IMR-90 (cell line): ENCODE measurements at regions of chr2 and their contacts with region 1.

Region 1: DNA sequence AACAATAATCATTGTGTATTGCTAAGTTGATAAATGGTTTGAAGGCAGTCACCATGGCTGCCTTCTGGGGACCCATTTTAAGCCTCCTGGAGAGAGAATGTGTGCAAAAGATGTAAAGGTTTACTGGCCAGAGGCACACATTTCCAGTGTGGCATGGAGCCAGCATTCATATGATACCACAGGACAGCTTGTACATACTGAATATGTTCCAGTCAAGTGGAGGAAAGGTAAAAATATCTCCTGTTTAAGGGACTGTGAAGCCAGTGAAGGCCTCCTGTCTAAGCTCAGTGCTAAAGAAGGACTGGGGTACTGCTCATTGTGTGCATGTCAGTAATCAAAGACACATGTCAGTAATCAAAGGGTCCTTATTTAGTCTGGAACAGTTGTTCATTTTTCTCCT is 119.2 kb downstream of the BABAM2 start:
- DNase-seq: peak; percentile 15
- ATAC-seq: no peak
- H3K4me3 ChIP-seq: no peak overlapping the region
- H3K27ac ChIP-seq: no peak overlapping the region
- H3K4me1 ChIP-seq: no peaks in the 10 kb centered on the region
- H3K27me3 ChIP-seq: no peaks in the 10 kb centered on the region
- CTCF ChIP-seq: no peak
- POLR2A ChIP-seq: no peak
- RAD21 ChIP-seq: no peak

Region 2: GRCh38 chr2:28074137-28074536 is 64.4 kb after region 1 on chr2:
- CTCF ChIA-PET with region 1: no interaction called
- POLR2A ChIA-PET with region 1: no interaction called
- dilution Hi-C with region 1: no loop called
- in situ Hi-C with region 1: no loop called
- intact Hi-C with region 1: loop called (anchors 5 kb)
- DNase-seq: no peak
- ATAC-seq: no peak
- H3K4me3 ChIP-seq: no peak overlapping the region
- H3K27ac ChIP-seq: no peak overlapping the region
- H3K4me1 ChIP-seq: no peaks in the 10 kb centered on the region
- H3K27me3 ChIP-seq: no peaks in the 10 kb centered on the region
- CTCF ChIP-seq: no peak
- POLR2A ChIP-seq: no peak
- RAD21 ChIP-seq: no peak

Region 3: GRCh38 chr2:28778392-28778791 is 768.7 kb after region 1 on chr2:
- CTCF ChIA-PET with region 1: no interaction called
- POLR2A ChIA-PET with region 1: no interaction called
- dilution Hi-C with region 1: no loop called
- in situ Hi-C with region 1: no loop called
- intact Hi-C with region 1: no loop called
- DNase-seq: no peak
- ATAC-seq: no peak
- H3K4me3 ChIP-seq: no peak overlapping the region
- H3K27ac ChIP-seq: no peak overlapping the region
- H3K4me1 ChIP-seq: no peaks in the 10 kb centered on the region
- H3K27me3 ChIP-seq: no peaks in the 10 kb centered on the region
- CTCF ChIP-seq: no peak
- POLR2A ChIP-seq: no peak
- RAD21 ChIP-seq: no peak